ENCODE measurements at regions of chr6 and their contacts with region 1.

Region 1: DNA sequence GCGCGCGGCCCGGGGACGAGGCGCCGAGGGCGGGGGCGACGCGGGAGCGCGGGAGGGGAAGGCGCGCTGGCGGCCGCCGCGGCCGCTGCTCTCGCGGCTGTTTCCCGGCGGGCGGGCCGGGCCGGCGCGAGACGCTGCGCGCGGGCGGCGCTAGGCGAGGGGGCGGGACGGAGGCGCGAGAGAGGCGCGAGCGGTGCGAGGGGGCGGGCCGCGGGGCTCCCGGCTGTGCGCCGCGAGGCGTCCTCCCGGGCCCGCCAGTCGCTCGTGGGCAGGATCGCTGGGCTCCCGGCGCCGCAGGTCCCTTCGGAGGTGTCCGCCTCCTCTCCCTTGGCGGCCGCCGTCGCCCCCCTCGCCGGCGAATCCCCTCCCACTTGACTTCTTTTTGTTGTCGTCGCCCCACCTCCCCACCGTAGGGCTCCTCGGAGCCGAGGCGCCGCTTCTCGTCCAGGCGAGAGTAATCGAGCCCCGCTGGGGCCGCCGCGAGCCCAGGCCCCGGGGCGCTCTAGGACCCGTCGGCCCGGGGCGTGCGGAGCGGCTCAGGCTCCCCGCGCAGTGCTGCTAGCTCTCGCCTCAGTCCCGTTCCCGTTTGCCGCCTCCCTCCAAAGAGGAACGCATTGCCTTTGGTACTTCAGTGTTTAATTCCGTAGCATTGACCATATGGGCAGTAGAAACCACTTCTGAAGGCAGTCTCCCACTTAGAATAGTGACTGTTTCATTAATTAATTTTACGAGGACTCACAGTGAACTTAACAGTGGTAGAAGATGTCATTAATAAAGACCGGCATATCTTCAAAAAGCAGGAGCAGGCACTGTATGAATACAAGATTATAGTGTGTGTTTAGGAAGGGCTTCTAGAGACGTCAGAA is at the start of gene RANBP9:
- DNase-seq: peak; percentile 92
- ATAC-seq: peak; percentile 83
- H3K4me3 Mint-ChIP-seq: peak within 1 kb of the TSS; percentile 97
- H3K27ac Mint-ChIP-seq: peak within 1 kb of the TSS; percentile 99
- H3K4me1 Mint-ChIP-seq: peaks cover 44% of the 10 kb centered on the region
- H3K27me3 Mint-ChIP-seq: no peaks in the 10 kb centered on the region
- CTCF ChIP-seq: no peak
- total RNA-seq, gene RANBP9: 30.7 and 34.7 TPM in 2 replicates

Region 2: GRCh38 chr6:13355043-13355951 is 356.7 kb before region 1 on chr6:
- CTCF ChIA-PET with region 1: no interaction called
- POLR2A ChIA-PET with region 1: no interaction called
- intact Hi-C with region 1: loop called (anchors 10 kb)
- DNase-seq: no peak
- ATAC-seq: peak; percentile 46
- H3K4me3 Mint-ChIP-seq: peak overlapping the region; percentile 70
- H3K27ac Mint-ChIP-seq: peak overlapping the region; percentile 92
- H3K4me1 Mint-ChIP-seq: peaks cover 70% of the 10 kb centered on the region
- H3K27me3 Mint-ChIP-seq: no peaks in the 10 kb centered on the region
- CTCF ChIP-seq: no peak

Region 3: GRCh38 chr6:13395272-13396237 is 316.4 kb before region 1 on chr6:
- CTCF ChIA-PET with region 1: no interaction called
- POLR2A ChIA-PET with region 1: interaction called, 11 read pairs
- intact Hi-C with region 1: no loop called
- DNase-seq: no peak
- ATAC-seq: peak; percentile 62
- H3K4me3 Mint-ChIP-seq: peak overlapping the region; percentile 47
- H3K27ac Mint-ChIP-seq: peak overlapping the region; percentile 91
- H3K4me1 Mint-ChIP-seq: peaks cover 56% of the 10 kb centered on the region
- H3K27me3 Mint-ChIP-seq: no peaks in the 10 kb centered on the region
- CTCF ChIP-seq: no peak

Region 4: GRCh38 chr6:13668291-13668928 is 43.6 kb before region 1 on chr6:
- CTCF ChIA-PET with region 1: no interaction called
- POLR2A ChIA-PET with region 1: interaction called, 13 read pairs
- intact Hi-C with region 1: no loop called
- DNase-seq: no peak
- ATAC-seq: no peak
- H3K4me3 Mint-ChIP-seq: no peak overlapping the region
- H3K27ac Mint-ChIP-seq: no peak overlapping the region
- H3K4me1 Mint-ChIP-seq: peaks cover 74% of the 10 kb centered on the region
- H3K27me3 Mint-ChIP-seq: no peaks in the 10 kb centered on the region
- CTCF ChIP-seq: no peak

Region 5: DNA sequence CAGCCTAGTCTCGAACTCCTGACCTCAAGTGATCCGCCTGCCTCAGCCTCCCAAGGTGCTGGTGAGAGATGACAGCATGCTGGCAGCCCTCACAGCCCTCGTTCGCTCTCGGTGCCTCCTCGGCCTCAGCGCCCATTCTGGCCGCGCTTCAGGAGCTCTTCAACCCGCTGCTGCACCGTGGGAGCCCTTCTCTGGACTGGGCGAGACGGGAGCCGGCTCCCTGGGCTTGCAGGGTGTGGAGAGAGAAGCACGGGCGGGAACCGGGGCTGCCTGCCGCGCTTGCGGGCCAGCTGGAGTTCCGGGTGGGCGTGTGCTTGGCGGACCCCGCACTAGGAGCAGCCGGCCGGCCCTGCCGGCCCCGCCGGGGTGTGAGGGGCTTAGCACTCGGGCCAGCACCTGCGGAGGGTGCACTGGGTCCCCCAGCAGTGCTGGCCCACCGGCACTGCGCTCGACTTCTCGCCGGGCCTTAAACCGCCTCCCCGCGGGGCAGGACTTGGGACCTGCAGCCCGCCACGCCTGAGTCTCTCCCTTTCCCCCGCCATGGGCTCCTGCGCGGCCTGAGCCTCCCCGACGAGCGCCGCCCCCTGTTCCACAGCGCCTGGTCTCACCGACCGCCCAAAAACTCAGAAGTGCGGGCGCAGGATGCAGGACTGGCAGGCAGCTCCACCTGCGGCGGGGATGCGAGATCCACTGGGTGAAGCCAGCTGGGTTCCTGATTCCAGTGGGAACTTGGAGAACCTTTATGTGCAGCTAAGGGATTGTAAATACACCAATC is 31.2 kb after region 1 on chr6:
- CTCF ChIA-PET with region 1: no interaction called
- POLR2A ChIA-PET with region 1: interaction called, 6 read pairs
- intact Hi-C with region 1: loop called (anchors 5 kb)
- DNase-seq: no peak
- ATAC-seq: no peak
- H3K4me3 Mint-ChIP-seq: peak overlapping the region; percentile 53
- H3K27ac Mint-ChIP-seq: no peak overlapping the region
- H3K4me1 Mint-ChIP-seq: no peaks in the 10 kb centered on the region
- H3K27me3 Mint-ChIP-seq: no peaks in the 10 kb centered on the region
- CTCF ChIP-seq: no peak

Region 6: GRCh38 chr6:13767121-13767808 is 55.3 kb after region 1 on chr6:
- CTCF ChIA-PET with region 1: no interaction called
- POLR2A ChIA-PET with region 1: interaction called, 6 read pairs
- intact Hi-C with region 1: loop called (anchors 1 kb)
- DNase-seq: no peak
- ATAC-seq: peak; percentile 49
- H3K4me3 Mint-ChIP-seq: peak overlapping the region; percentile 81
- H3K27ac Mint-ChIP-seq: no peak overlapping the region
- H3K4me1 Mint-ChIP-seq: peaks cover 45% of the 10 kb centered on the region
- H3K27me3 Mint-ChIP-seq: no peaks in the 10 kb centered on the region
- CTCF ChIP-seq: no peak

Region 7: DNA sequence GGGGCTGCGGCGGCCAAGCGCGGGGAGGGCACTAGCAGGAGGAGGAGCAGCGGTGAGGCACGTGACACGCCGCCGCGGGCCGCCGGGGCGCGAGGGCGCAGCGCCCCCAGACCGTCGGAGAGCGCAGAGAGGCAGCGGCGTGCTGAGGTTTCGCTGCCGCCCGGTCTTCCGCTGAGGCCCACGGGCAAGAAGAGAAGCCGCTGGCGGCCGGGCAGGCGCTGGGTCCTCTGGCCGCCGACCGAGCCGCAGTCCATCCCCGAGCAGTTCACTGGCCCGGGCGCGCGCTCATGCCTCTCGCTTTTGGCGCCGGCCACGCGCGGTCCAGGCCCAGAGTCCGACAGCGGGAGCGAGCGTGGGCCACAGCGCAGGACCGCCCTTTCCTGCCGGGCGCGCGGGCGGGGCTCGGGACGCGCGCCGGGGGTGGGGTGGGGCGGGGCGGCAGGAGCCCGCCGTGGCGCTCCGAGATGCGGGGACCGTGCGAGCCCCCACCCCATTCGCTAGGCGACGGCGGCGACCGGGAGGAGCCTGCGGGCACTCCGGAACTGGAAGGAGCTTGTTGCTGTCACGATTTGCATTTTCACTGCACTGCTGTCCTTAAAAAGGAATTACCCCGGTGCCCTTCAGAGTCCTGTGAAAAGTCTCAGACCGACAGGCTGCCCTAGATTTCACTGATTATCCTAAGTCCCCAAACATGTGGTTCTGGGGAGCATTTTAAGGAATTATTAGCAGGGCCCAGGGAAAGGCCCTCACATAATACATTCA is 102.4 kb after region 1 on chr6 and contains the start of gene MCUR1:
- CTCF ChIA-PET with region 1: no interaction called
- POLR2A ChIA-PET with region 1: interaction called, 4 read pairs
- intact Hi-C with region 1: loop called (anchors 1 kb)
- DNase-seq: peak; percentile 81
- ATAC-seq: peak; percentile 83
- H3K4me3 Mint-ChIP-seq: peak within 1 kb of the TSS; percentile 91
- H3K27ac Mint-ChIP-seq: peak within 1 kb of the TSS; percentile 87
- H3K4me1 Mint-ChIP-seq: peaks cover 32% of the 10 kb centered on the region
- H3K27me3 Mint-ChIP-seq: no peaks in the 10 kb centered on the region
- CTCF ChIP-seq: no peak
- total RNA-seq, gene MCUR1: 13.6 and 14.1 TPM in 2 replicates

Region 8: GRCh38 chr6:14002176-14002947 is 290.4 kb after region 1 on chr6:
- CTCF ChIA-PET with region 1: no interaction called
- POLR2A ChIA-PET with region 1: no interaction called
- intact Hi-C with region 1: no loop called
- DNase-seq: no peak
- ATAC-seq: no peak
- H3K4me3 Mint-ChIP-seq: no peak overlapping the region
- H3K27ac Mint-ChIP-seq: no peak overlapping the region
- H3K4me1 Mint-ChIP-seq: no peaks in the 10 kb centered on the region
- H3K27me3 Mint-ChIP-seq: peaks cover 6% of the 10 kb centered on the region
- CTCF ChIP-seq: no peak